Aorta (tissue), 5 donors: ENCODE measurements at regions of chr15 and their contacts with region 1.

Region 1: GRCh38 chr15:66145731-66146182 is 107.8 kb downstream of the MEGF11 start:
- DNase-seq: no peak
- ATAC-seq: no peak
- H3K4me3 ChIP-seq: no peak overlapping the region
- H3K27ac ChIP-seq: no peak overlapping the region
- H3K4me1 ChIP-seq: no peaks in the 10 kb centered on the region
- H3K27me3 ChIP-seq: no peaks in the 10 kb centered on the region

Region 2: GRCh38 chr15:66072616-66073361 is 73.0 kb before region 1 on chr15:
- intact Hi-C with region 1: no loop called
- DNase-seq: no peak
- ATAC-seq: no peak
- H3K4me3 ChIP-seq: no peak overlapping the region
- H3K27ac ChIP-seq: no peak overlapping the region
- H3K4me1 ChIP-seq: no peaks in the 10 kb centered on the region
- H3K27me3 ChIP-seq: no peaks in the 10 kb centered on the region

Region 3: DNA sequence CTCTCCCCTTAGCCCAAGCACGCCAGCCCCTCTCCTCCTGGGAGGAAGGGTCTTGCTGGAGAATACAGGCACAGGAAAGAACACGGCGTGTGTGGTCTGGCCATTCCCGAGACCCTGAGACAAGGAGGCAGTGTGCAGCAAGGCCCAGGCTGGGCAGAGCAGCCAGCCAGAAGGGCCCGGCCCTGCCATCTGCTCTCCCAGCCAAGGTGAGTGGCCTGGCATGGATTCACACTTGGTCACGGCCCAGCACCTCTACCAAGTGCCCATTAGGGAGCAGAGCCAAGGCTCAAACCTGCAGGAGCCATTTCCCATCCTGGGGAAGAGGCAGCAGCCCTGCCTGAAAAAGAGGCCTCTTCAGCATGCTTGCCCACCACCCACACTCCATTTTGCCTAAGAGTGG is 79.2 kb after region 1 on chr15:
- intact Hi-C with region 1: loop called in 1 of 2 experiments (anchors 2 kb)
- DNase-seq: no peak
- ATAC-seq: no peak
- H3K4me3 ChIP-seq: no peak overlapping the region
- H3K27ac ChIP-seq: no peak overlapping the region
- H3K4me1 ChIP-seq: no peaks in the 10 kb centered on the region
- H3K27me3 ChIP-seq: no peaks in the 10 kb centered on the region

Region 4: GRCh38 chr15:66293419-66294156 is 147.8 kb after region 1 on chr15 and contains the start of gene DIS3L:
- intact Hi-C with region 1: no loop called
- DNase-seq: peak; percentile 70 to 87
- ATAC-seq: peak; percentile 89
- H3K4me3 ChIP-seq: peak within 1 kb of the TSS; percentile 82
- H3K27ac ChIP-seq: peak within 1 kb of the TSS; percentile 46 to 85
- H3K4me1 ChIP-seq: peaks cover 0 to 3% of the 10 kb centered on the region in 2 donors
- H3K27me3 ChIP-seq: no peaks in the 10 kb centered on the region
- total RNA-seq, gene DIS3L: 18.3 to 36.2 TPM